Common myeloid progenitor, CD34-positive (primary cell): ENCODE measurements at regions of chr17 and their contacts with region 1.

Region 1: GRCh38 chr17:2786176-2786881 is 9.9 kb upstream of the RAP1GAP2 start:
- DNase-seq: peak; percentile 95 to 96 (median 96)
- H3K4me3 ChIP-seq: peak overlapping the region in 1 of 7 experiments; percentile 41
- H3K27ac ChIP-seq: no peak overlapping the region
- H3K4me1 ChIP-seq: peaks cover 2 to 66% (median 40%) of the 10 kb centered on the region in 4 experiments
- H3K27me3 ChIP-seq: no peaks in the 10 kb centered on the region

Region 2: GRCh38 chr17:2499979-2500378 is 286.4 kb before region 1 on chr17:
- CTCF ChIA-PET with region 1: no interaction called
- POLR2A ChIA-PET with region 1: no interaction called
- DNase-seq: no peak
- H3K4me3 ChIP-seq: no peak overlapping the region
- H3K27ac ChIP-seq: no peak overlapping the region
- H3K4me1 ChIP-seq: no peaks in the 10 kb centered on the region
- H3K27me3 ChIP-seq: no peaks in the 10 kb centered on the region

Region 3: DNA sequence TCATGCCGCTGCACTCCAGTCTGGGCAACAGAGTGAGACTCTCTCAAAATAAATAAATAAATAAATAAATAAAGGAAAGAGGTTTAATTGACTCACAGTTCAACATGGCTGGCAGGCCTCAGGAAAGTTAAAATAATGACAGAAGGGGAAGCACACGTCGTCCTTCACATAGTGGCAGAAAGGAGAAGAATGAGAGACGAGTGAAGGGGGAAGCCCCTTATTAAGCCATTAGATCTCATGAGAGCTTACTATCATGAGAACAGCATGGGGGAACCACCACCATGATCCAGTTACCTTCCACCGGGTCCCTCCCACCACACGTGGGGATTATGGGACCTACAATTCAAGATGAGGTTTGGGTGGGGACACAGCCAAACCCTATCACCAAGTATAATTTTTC is 138.4 kb before region 1 on chr17:
- CTCF ChIA-PET with region 1: no interaction called
- POLR2A ChIA-PET with region 1: no interaction called
- DNase-seq: peak in 2 of 3 donors; percentile 47
- H3K4me3 ChIP-seq: no peak overlapping the region
- H3K27ac ChIP-seq: no peak overlapping the region
- H3K4me1 ChIP-seq: no peaks in the 10 kb centered on the region
- H3K27me3 ChIP-seq: no peaks in the 10 kb centered on the region

Region 4: GRCh38 chr17:2796164-2797125 is 10.1 kb after region 1 on chr17 and contains the start of gene RAP1GAP2:
- CTCF ChIA-PET with region 1: interaction called, 34 read pairs
- POLR2A ChIA-PET with region 1: interaction called, 7 read pairs
- DNase-seq: peak; percentile 90 to 96 (median 95)
- H3K4me3 ChIP-seq: peak within 1 kb of the TSS; percentile 21 to 91 (median 70)
- H3K27ac ChIP-seq: peak within 1 kb of the TSS in 1 of 2 experiments; percentile 23
- H3K4me1 ChIP-seq: peaks cover 0 to 77% (median 69%) of the 10 kb centered on the region in 4 experiments
- H3K27me3 ChIP-seq: peaks cover 0 to 2% (median 0%) of the 10 kb centered on the region in 5 experiments

Region 5: GRCh38 chr17:2801841-2802240 is 15.5 kb after region 1 on chr17:
- CTCF ChIA-PET with region 1: interaction called, 34 read pairs
- POLR2A ChIA-PET with region 1: interaction called, 3 read pairs
- DNase-seq: no peak
- H3K4me3 ChIP-seq: no peak overlapping the region
- H3K27ac ChIP-seq: no peak overlapping the region
- H3K4me1 ChIP-seq: peaks cover 0 to 30% (median 21%) of the 10 kb centered on the region in 4 experiments
- H3K27me3 ChIP-seq: peaks cover 0 to 2% (median 0%) of the 10 kb centered on the region in 5 experiments

Region 6: GRCh38 chr17:2814481-2815341 is 28.4 kb after region 1 on chr17:
- CTCF ChIA-PET with region 1: interaction called, 25 read pairs
- POLR2A ChIA-PET with region 1: interaction called, 14 read pairs
- DNase-seq: peak; percentile 92 to 97 (median 97)
- H3K4me3 ChIP-seq: peak overlapping the region in 6 of 7 experiments; percentile 47 to 77 (median 60)
- H3K27ac ChIP-seq: no peak overlapping the region
- H3K4me1 ChIP-seq: peaks cover 0 to 40% (median 28%) of the 10 kb centered on the region in 4 experiments
- H3K27me3 ChIP-seq: no peaks in the 10 kb centered on the region

Region 7: DNA sequence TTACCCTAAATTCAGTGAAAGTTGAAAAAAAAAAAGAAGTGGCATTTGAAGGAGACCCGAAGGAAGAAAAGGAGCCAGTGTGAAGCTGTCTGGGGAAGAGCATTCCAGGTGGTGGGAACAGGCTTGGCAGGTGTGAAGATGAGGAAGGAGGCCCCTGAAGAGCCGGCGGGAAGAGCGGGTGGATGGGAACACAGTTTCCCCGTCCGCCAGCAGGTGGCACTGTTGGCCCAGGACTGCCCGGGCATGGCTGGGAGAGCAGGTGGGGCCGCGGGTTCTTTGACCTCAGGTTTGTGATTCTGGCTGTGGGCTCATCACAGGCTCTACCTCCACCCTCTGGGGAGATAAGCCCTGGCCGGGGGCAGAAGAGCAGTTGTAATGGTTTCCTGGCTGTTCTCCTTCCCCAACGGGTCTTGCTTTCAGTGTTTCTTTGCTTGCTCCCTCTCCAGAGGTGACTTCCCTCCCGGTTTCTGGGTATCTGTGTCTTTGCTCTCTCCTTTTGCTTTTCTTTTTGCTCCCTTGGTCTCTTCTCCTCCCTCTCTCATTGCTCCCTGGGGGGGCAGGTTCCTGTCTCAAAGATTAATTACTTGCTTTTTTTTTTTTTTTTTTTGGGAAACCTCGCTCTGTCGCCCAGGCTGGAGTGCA is 42.2 kb after region 1 on chr17:
- CTCF ChIA-PET with region 1: interaction called, 52 read pairs
- POLR2A ChIA-PET with region 1: interaction called, 9 read pairs
- DNase-seq: peak; percentile 65 to 81 (median 76)
- H3K4me3 ChIP-seq: peak overlapping the region in 1 of 7 experiments; percentile 28
- H3K27ac ChIP-seq: no peak overlapping the region
- H3K4me1 ChIP-seq: peaks cover 0 to 26% (median 18%) of the 10 kb centered on the region in 4 experiments
- H3K27me3 ChIP-seq: no peaks in the 10 kb centered on the region

Region 8: DNA sequence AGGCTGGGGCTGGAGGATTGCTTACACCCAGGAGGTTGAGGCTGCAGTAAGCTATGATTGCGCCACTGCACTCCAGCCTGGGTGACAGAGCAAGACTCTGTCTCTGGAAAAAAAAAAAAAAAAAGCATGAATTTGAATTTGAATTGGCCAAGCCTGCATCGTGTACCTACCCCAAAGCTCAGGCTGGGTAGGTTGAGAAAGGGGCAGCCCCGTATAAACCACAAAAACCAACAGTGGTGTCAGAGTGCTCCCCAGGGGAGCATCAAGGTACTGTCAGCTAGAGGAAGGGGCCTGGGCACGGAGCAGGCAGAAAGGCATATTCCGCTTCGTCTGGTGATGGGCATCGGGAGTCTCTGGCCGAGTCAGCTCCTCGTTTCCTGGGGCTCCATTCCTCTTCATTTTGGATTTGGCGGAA is 50.8 kb after region 1 on chr17:
- CTCF ChIA-PET with region 1: interaction called, 20 read pairs
- POLR2A ChIA-PET with region 1: interaction called, 4 read pairs
- DNase-seq: peak in 2 of 3 donors; percentile 53 to 54
- H3K4me3 ChIP-seq: no peak overlapping the region
- H3K27ac ChIP-seq: no peak overlapping the region
- H3K4me1 ChIP-seq: peaks cover 0 to 10% (median 1%) of the 10 kb centered on the region in 4 experiments
- H3K27me3 ChIP-seq: no peaks in the 10 kb centered on the region

Region 9: GRCh38 chr17:3012926-3013581 is 226.7 kb after region 1 on chr17:
- CTCF ChIA-PET with region 1: interaction called, 12 read pairs
- POLR2A ChIA-PET with region 1: no interaction called
- DNase-seq: peak; percentile 55 to 73 (median 67)
- H3K4me3 ChIP-seq: no peak overlapping the region
- H3K27ac ChIP-seq: no peak overlapping the region
- H3K4me1 ChIP-seq: no peaks in the 10 kb centered on the region
- H3K27me3 ChIP-seq: no peaks in the 10 kb centered on the region